ENCODE measurements at regions of chr11 and their contacts with region 1.

Region 1: GRCh38 chr11:44171518-44171917 is 76.0 kb downstream of the EXT2 start:
- DNase-seq: no peak
- ATAC-seq: no peak
- H3K4me3 ChIP-seq: no peak overlapping the region
- H3K27ac ChIP-seq: no peak overlapping the region
- H3K4me1 ChIP-seq: no peaks in the 10 kb centered on the region
- H3K27me3 ChIP-seq: no peaks in the 10 kb centered on the region
- CTCF ChIP-seq: no peak

Region 2: DNA sequence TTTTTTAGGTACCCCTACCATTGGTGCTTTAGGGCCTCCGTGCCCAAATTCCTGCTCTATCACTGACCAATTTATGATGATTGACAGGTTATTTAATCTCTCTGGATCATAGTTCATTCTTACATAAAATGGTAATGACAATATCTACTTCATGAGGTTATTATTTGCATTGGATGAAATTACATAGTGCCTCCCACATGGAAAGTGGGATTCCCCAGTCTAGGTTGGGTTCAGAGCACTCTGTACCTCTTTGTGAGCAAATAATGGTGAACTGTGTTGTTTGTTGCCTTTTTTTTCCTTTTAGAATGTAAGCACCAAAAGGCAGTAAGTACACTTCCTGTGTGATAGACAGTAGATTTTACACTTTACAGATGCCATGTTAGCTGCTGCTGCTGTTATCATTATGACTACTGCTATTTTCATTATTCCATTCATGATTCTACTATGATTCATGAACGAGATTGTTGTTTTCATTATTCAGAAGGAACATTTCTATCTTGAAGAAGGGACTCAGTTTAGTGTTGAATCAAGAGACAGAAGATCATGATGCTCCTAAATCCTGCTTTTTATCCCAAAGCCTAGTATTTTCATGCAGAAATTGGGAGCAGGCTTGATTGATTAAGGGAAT is 37.6 kb after region 1 on chr11:
- CTCF ChIA-PET with region 1: no interaction called
- POLR2A ChIA-PET with region 1: interaction called, 15 read pairs
- in situ Hi-C with region 1: no loop called
- intact Hi-C with region 1: no loop called
- DNase-seq: no peak
- ATAC-seq: no peak
- H3K4me3 ChIP-seq: no peak overlapping the region
- H3K27ac ChIP-seq: no peak overlapping the region
- H3K4me1 ChIP-seq: no peaks in the 10 kb centered on the region
- H3K27me3 ChIP-seq: no peaks in the 10 kb centered on the region
- CTCF ChIP-seq: no peak

Region 3: DNA sequence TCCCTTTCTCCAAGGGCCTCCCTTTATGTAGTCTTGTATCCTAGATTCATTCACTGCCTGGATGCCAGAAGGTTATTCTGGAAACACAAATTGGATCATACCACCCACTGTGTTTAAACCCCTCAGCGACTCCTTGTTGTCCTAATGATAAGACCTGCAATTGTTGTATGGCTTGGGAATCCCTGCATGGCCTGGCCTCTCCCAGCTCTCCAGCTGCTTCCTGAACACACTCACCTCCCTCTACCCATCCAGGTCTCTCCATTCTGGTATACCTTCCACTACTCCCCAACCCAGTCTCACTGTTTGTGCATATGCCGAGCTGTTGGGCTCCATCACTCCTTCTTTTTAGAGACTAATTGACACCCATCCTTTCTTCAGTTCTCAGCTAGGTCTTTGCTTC is 262.7 kb after region 1 on chr11:
- CTCF ChIA-PET with region 1: no interaction called
- POLR2A ChIA-PET with region 1: no interaction called
- in situ Hi-C with region 1: no loop called
- intact Hi-C with region 1: no loop called
- DNase-seq: no peak
- ATAC-seq: no peak
- H3K4me3 ChIP-seq: no peak overlapping the region
- H3K27ac ChIP-seq: no peak overlapping the region
- H3K4me1 ChIP-seq: no peaks in the 10 kb centered on the region
- H3K27me3 ChIP-seq: peaks cover 9% of the 10 kb centered on the region
- CTCF ChIP-seq: no peak

Region 4: DNA sequence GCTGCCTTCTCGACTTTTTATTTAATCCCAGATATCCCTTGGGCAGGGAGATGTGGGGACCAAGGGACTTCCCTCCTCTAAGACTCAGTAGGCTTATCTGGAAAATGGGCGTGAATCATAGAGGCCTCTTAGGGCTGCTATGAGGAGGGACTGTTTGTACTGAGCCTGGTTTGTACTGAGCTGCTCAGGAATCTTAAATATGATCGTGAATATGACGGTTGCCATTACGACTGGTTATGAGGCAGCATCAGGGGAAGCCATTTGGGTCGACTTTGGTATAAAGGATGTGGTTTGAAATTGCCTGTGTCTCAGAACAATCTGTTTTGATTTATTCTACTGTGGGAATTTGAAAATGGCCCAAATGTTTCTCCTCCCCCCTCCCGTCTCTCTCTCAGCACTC is 575.8 kb after region 1 on chr11:
- CTCF ChIA-PET with region 1: no interaction called
- POLR2A ChIA-PET with region 1: no interaction called
- in situ Hi-C with region 1: no loop called
- intact Hi-C with region 1: no loop called
- DNase-seq: no peak
- ATAC-seq: no peak
- H3K4me3 ChIP-seq: no peak overlapping the region
- H3K27ac ChIP-seq: no peak overlapping the region
- H3K4me1 ChIP-seq: 0 out of 2 replicates have a peak, but pooled peaks cover 2% of the 10 kb centered on the region
- H3K27me3 ChIP-seq: no peaks in the 10 kb centered on the region
- CTCF ChIP-seq: no peak